Activated CD4-positive, alpha-beta T cell treated with anti-CD3 and anti-CD28 coated beads, Interleukin-2, amount 10 ng/mL, durations not matched to agents 24 days and 14 days (primary cell): ENCODE measurements at regions of chr5 and their contacts with region 1.

Region 1: GRCh38 chr5:142655339-142656267 is 30.3 kb downstream of the FGF1 start:
- DNase-seq: peak; percentile 90
- H3K4me3 Mint-ChIP-seq: no peak overlapping the region
- H3K27ac Mint-ChIP-seq: no peak overlapping the region
- H3K4me1 Mint-ChIP-seq: no peaks in the 10 kb centered on the region
- H3K27me3 Mint-ChIP-seq: peaks cover 25% of the 10 kb centered on the region

Region 2: GRCh38 chr5:142611154-142611553 is 44.4 kb before region 1 on chr5:
- intact Hi-C with region 1: loop called (anchors 2 kb)
- DNase-seq: peak; percentile 90
- H3K4me3 Mint-ChIP-seq: no peak overlapping the region
- H3K27ac Mint-ChIP-seq: no peak overlapping the region
- H3K4me1 Mint-ChIP-seq: peaks cover 2% of the 10 kb centered on the region
- H3K27me3 Mint-ChIP-seq: peaks cover 30% of the 10 kb centered on the region

Region 3: GRCh38 chr5:142938266-142938880 is 282.8 kb after region 1 on chr5:
- intact Hi-C with region 1: no loop called
- DNase-seq: no peak
- H3K4me3 Mint-ChIP-seq: no peak overlapping the region
- H3K27ac Mint-ChIP-seq: no peak overlapping the region
- H3K4me1 Mint-ChIP-seq: peaks cover 26% of the 10 kb centered on the region
- H3K27me3 Mint-ChIP-seq: no peaks in the 10 kb centered on the region